H1 (cell line): ENCODE measurements at regions of chr9 and their contacts with region 1.

Region 1: DNA sequence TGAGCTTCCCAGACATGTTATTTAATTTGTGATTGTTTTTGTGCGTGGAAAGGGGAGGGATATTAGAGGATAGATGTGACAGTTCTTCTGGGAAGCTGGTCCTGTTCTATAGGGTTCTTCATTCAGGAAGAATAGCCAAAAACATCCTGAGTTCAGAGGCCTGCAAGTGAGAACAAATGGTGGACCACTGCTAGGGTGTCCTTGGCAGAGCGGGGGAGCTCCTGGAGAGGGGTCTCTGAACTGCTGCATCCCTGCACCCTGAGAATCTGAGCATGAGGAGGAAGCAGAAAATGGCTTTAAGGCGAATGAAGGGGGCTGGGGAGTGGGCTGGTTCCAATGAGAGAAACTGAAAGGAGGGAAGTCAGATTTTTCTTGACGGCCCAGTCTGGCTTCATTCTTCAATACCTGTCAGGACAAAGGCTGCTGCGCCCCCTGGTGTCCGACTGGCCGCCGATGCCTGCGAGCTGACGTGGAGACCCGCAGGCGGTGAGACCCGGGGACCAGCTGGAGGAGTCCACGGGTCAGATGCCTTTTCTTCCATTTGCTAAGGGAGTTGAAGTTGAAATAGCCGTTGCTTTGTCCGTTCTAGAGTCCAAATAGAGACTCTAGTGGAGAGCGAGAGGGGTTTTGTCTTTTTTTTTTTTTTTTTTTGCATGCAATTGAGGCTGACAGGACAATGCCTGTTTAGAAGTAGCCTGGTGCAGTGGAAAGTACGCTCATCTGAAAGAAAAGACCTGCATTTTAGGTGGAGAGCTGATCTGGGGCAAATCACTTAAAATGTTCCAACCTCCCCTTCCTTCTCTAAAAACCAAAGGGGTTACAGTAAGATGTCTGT is 39.5 kb upstream of the NFIB start:
- DNase-seq: peak in 1 of 2 experiments; percentile 99
- H3K4me3 ChIP-seq: 0 out of 8 replicates have a peak overlapping the region, but pooled peaks of 1 of the 4 experiments have one; percentile 16
- H3K27ac ChIP-seq: no peak overlapping the region
- H3K4me1 ChIP-seq: peaks cover 7 to 17% (median 14%) of the 10 kb centered on the region in 4 experiments
- H3K27me3 ChIP-seq: peaks cover 28 to 48% (median 43%) of the 10 kb centered on the region in 4 experiments
- CTCF ChIP-seq: peak; percentile 84 to 95 (median 93)
- EP300 ChIP-seq: no peak
- POLR2A ChIP-seq: no peak
- RAD21 ChIP-seq: peak; percentile 92 to 95

Region 2: DNA sequence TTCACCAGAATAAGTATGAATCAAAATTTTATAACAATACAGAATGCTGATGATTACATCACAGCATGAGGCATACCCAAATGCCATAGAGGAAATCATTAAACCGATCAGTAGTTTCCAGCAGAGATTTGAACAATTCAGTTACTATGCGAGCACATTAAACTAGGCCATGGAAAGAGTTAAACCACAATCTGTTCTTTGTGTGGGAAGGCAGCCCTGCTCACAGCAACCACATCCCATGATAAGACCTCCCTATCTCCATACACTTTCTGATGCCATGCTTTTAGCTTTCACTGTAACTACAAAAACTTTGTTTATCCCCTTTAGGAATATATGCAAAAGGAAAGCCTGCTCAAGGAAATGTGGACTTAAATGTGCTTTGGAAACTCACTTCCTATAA is 44.0 kb before region 1 on chr9:
- CTCF ChIA-PET with region 1: interaction called, 14 read pairs
- POLR2A ChIA-PET with region 1: interaction called, 12 read pairs
- DNase-seq: no peak
- H3K4me3 ChIP-seq: no peak overlapping the region
- H3K27ac ChIP-seq: no peak overlapping the region
- H3K4me1 ChIP-seq: peaks cover 0 to 7% (median 2%) of the 10 kb centered on the region in 4 experiments; a peak in 1 of 7 replicates
- H3K27me3 ChIP-seq: peaks cover 0 to 5% (median 0%) of the 10 kb centered on the region in 4 experiments; a peak in 3 of 7 replicates
- CTCF ChIP-seq: no peak
- EP300 ChIP-seq: no peak
- POLR2A ChIP-seq: no peak
- RAD21 ChIP-seq: no peak

Region 3: GRCh38 chr9:14320271-14321181 is 32.9 kb before region 1 on chr9:
- CTCF ChIA-PET with region 1: interaction called, 18 read pairs
- POLR2A ChIA-PET with region 1: interaction called, 26 read pairs
- DNase-seq: no peak
- H3K4me3 ChIP-seq: peak overlapping the region; percentile 17 to 84 (median 32); a peak in 5 of 8 replicates
- H3K27ac ChIP-seq: no peak overlapping the region
- H3K4me1 ChIP-seq: peaks cover 16 to 36% (median 20%) of the 10 kb centered on the region in 4 experiments
- H3K27me3 ChIP-seq: peaks cover 0 to 6% (median 2%) of the 10 kb centered on the region in 4 experiments; a peak in 2 of 7 replicates
- CTCF ChIP-seq: no peak
- EP300 ChIP-seq: no peak
- POLR2A ChIP-seq: no peak
- RAD21 ChIP-seq: no peak

Region 4: GRCh38 chr9:14400658-14400995 is 47.2 kb after region 1 on chr9:
- CTCF ChIA-PET with region 1: interaction called, 23 read pairs
- POLR2A ChIA-PET with region 1: no interaction called
- DNase-seq: peak; percentile 62 to 64
- H3K4me3 ChIP-seq: no peak overlapping the region
- H3K27ac ChIP-seq: no peak overlapping the region
- H3K4me1 ChIP-seq: peaks cover 0 to 7% (median 2%) of the 10 kb centered on the region in 4 experiments; a peak in 2 of 7 replicates
- H3K27me3 ChIP-seq: no peaks in the 10 kb centered on the region
- CTCF ChIP-seq: peak in 2 of 3 experiments; percentile 58 to 67; a peak in 3 of 4 replicates
- EP300 ChIP-seq: peak in 1 of 2 experiments; percentile 49; a peak in 1 of 3 replicates
- POLR2A ChIP-seq: no peak
- RAD21 ChIP-seq: peak; percentile 87 to 91

Region 5: DNA sequence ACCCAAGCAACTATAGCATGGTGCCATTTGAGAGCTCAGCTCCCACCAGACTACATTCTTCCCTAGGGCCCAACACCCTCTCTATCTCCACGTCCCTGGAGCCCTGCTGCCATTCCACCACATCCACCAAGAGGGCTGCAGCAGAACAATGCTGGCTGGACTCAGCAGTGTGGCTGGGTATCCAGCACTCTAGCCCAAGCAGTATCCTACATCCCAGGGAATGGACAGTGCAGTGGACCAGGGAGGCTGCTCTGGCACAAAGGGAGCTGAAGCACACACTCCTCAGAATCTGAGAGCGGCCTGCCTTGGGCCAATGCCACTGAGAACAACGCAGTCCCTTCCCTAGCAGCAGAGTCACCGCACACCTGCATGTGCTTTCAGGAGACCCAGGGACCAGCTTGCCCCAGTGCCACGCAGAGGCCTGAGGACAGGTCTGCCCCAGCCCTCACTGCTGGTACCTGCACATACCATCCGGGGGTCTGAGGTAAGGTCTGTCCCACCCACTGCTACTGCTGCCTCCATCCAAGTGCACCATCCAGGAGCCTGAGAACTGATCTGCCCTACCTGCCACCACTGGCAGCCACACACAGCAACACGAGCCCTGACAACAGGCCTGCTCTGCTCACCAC is 243.8 kb after region 1 on chr9:
- CTCF ChIA-PET with region 1: no interaction called
- POLR2A ChIA-PET with region 1: no interaction called
- DNase-seq: no peak
- H3K4me3 ChIP-seq: no peak overlapping the region
- H3K27ac ChIP-seq: no peak overlapping the region
- H3K4me1 ChIP-seq: no peaks in the 10 kb centered on the region
- H3K27me3 ChIP-seq: no peaks in the 10 kb centered on the region
- CTCF ChIP-seq: no peak
- EP300 ChIP-seq: no peak
- POLR2A ChIP-seq: no peak
- RAD21 ChIP-seq: no peak

Region 6: GRCh38 chr9:14633906-14634565 is 280.6 kb after region 1 on chr9:
- CTCF ChIA-PET with region 1: no interaction called
- POLR2A ChIA-PET with region 1: no interaction called
- DNase-seq: no peak
- H3K4me3 ChIP-seq: no peak overlapping the region
- H3K27ac ChIP-seq: no peak overlapping the region
- H3K4me1 ChIP-seq: peaks cover 0 to 3% (median 0%) of the 10 kb centered on the region in 4 experiments; a peak in 2 of 7 replicates
- H3K27me3 ChIP-seq: no peaks in the 10 kb centered on the region
- CTCF ChIP-seq: no peak
- EP300 ChIP-seq: no peak
- POLR2A ChIP-seq: no peak
- RAD21 ChIP-seq: no peak